ENCODE measurements at regions of chr7 and their contacts with region 1.

Region 1: GRCh38 chr7:152780935-152781334 is 21.4 kb downstream of the ACTR3B start:
- DNase-seq: no peak
- ATAC-seq: no peak
- H3K4me3 Mint-ChIP-seq: no peak overlapping the region
- H3K27ac Mint-ChIP-seq: no peak overlapping the region
- H3K4me1 Mint-ChIP-seq: peaks cover 11% of the 10 kb centered on the region
- H3K27me3 Mint-ChIP-seq: no peaks in the 10 kb centered on the region
- CTCF ChIP-seq: no peak

Region 2: GRCh38 chr7:152133804-152134203 is 647.1 kb before region 1 on chr7:
- CTCF ChIA-PET with region 1: no interaction called
- POLR2A ChIA-PET with region 1: interaction called, 11 read pairs
- DNase-seq: no peak
- ATAC-seq: no peak
- H3K4me3 Mint-ChIP-seq: no peak overlapping the region
- H3K27ac Mint-ChIP-seq: peak overlapping the region; percentile 63
- H3K4me1 Mint-ChIP-seq: peaks cover 3% of the 10 kb centered on the region; the same call in 1 of the 2 replicates
- H3K27me3 Mint-ChIP-seq: no peaks in the 10 kb centered on the region
- CTCF ChIP-seq: no peak

Measured in WTC11 (cell line).